Naive thymus-derived CD4-positive, alpha-beta T cell (primary cell): ENCODE measurements at regions of chr1 and their contacts with region 1.

Region 1: DNA sequence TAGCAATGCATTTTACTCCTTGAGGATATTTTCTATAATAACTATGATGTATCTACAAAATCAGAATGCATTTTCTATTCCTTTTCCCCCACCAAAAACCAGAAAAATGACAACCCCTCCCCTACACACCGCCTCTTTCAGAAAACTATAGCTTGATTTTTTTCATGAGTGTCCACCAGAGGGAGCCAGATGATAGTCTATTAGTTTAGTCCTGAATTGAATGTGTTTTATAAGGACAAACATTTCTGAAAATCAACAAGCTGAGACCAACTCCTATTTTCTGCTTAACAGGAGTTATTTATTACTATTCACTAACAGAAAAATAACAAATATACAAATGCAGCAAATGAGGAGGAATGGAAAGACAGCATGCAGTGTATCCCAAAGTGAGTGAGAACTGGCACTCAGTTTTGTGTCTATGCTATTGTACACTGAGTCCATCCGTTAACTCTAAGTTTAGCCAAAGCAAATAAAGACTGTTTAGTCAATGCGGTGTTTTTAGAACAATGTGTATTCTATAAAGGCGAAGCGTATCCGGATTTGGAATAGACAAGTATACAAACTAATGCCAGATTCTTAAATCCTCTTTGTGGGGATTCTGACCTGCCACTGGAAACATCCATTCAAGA is 182.6 kb downstream of the VAV3 start:
- DNase-seq: peak in 7 of 9 donors; percentile 41 to 76 (median 66)
- ATAC-seq: no peak
- H3K4me3 ChIP-seq: no peak overlapping the region
- H3K4me3 Mint-ChIP-seq: no peak overlapping the region
- H3K27ac ChIP-seq: no peak overlapping the region
- H3K27ac Mint-ChIP-seq: peak overlapping the region in 1 of 9 donors; percentile 1
- H3K4me1 ChIP-seq: peaks cover 18 to 24% of the 10 kb centered on the region in 2 donors
- H3K4me1 Mint-ChIP-seq: peaks cover 23 to 39% (median 25%) of the 10 kb centered on the region in 7 donors
- H3K27me3 ChIP-seq: no peaks in the 10 kb centered on the region
- H3K27me3 Mint-ChIP-seq: peaks cover 0 to 2% (median 0%) of the 10 kb centered on the region in 5 donors

Region 2: DNA sequence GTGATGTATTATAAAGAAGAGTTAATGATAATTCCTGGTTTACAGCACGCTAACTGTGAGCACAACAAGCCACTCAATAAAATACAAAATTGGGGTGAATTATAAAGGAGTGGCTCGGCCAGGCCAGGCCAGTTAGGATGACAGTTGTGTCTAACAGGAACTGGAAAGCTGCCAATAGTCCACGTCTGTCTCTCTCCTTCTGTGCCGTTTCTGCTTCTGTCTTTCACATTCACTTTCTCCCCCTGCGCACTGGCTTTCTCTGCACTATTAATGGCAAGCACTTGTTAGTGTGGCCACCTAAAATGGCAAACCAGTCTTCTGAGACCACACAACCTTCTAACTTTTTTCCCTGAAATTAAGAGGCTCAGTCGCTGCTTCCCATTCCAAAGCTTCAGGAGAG is 247.2 kb before region 1 on chr1:
- CTCF ChIA-PET with region 1: no interaction called
- POLR2A ChIA-PET with region 1: no interaction called
- intact Hi-C with region 1: no loop called
- DNase-seq: no peak
- ATAC-seq: no peak
- H3K4me3 ChIP-seq: no peak overlapping the region
- H3K4me3 Mint-ChIP-seq: no peak overlapping the region
- H3K27ac ChIP-seq: no peak overlapping the region
- H3K27ac Mint-ChIP-seq: no peak overlapping the region
- H3K4me1 ChIP-seq: no peaks in the 10 kb centered on the region
- H3K4me1 Mint-ChIP-seq: peaks cover 0 to 2% (median 0%) of the 10 kb centered on the region in 7 donors
- H3K27me3 ChIP-seq: no peaks in the 10 kb centered on the region
- H3K27me3 Mint-ChIP-seq: peaks cover 4 to 15% (median 7%) of the 10 kb centered on the region in 5 donors

Region 3: DNA sequence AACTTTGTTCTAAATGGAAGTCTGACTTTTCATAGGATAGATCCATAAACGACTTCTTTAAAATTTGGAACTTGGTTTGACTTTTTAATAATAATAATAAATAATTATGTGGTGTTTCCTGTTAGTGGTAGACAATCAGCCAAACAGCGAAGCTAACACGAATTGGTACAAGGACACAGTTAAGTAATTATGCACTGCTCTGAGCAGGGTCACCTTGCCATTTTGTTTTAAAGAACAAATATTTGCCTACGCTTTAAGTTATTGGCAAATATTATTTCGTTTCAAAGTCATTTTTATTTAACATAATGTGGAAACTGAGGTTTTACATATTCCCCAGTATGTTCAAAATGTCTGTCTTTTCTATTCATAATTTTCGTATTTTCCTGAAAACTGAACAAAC is 26.0 kb before region 1 on chr1:
- CTCF ChIA-PET with region 1: no interaction called
- POLR2A ChIA-PET with region 1: no interaction called
- intact Hi-C with region 1: no loop called
- DNase-seq: no peak
- ATAC-seq: no peak
- H3K4me3 ChIP-seq: no peak overlapping the region
- H3K4me3 Mint-ChIP-seq: no peak overlapping the region
- H3K27ac ChIP-seq: no peak overlapping the region
- H3K27ac Mint-ChIP-seq: no peak overlapping the region
- H3K4me1 ChIP-seq: no peaks in the 10 kb centered on the region
- H3K4me1 Mint-ChIP-seq: no peaks in the 10 kb centered on the region
- H3K27me3 ChIP-seq: no peaks in the 10 kb centered on the region
- H3K27me3 Mint-ChIP-seq: no peaks in the 10 kb centered on the region

Region 4: DNA sequence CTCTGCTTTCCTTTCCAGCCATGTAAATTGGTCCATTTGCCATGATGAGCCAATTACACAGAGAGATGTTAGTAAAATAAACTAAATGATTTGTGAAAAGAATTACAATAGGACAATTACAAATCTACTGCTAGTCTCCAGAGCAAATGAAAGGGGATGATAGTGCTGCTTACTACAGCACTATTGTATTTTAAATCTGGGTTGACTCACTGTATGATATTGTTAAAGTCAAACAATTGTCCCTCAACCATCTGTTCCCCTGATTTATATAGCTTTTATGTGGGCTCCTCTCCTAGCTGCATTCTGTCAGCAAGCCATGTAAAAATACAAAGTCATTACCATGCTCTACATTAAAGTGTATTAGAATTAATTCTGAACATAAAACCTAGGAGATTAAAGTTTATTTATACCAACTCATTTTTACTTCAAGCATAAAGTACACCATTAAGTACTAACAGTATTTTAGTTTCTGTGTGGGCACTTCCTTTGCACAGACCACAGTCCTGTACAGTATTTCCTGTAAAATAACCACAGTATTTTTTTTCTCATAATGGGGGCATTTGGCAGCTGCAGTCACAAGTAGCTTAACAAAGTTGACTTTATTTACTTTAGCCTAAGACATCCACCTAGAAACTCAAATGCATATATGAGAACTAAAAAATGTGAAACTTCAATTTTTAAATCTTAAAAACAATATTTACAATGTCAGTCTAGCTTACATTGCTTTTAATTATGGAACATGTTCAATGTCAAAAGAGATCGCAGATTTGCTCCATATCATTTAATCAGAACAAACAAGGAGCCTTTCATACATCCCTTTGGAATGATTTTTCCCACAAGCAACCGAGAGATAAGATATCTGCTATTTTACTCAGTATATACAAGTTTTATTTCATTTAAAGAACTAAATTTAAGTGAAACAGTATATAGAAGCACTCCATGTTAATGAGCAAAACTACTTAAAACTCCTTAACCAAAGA is 47.0 kb after region 1 on chr1:
- CTCF ChIA-PET with region 1: no interaction called
- POLR2A ChIA-PET with region 1: no interaction called
- intact Hi-C with region 1: loop called in 1 of 2 experiments (anchors 5 kb)
- DNase-seq: no peak
- ATAC-seq: peak; percentile 80
- H3K4me3 ChIP-seq: no peak overlapping the region
- H3K4me3 Mint-ChIP-seq: peak overlapping the region in 8 of 10 donors; percentile 18 to 65 (median 42)
- H3K27ac ChIP-seq: no peak overlapping the region
- H3K27ac Mint-ChIP-seq: peak overlapping the region in 7 of 9 donors; percentile 25 to 56 (median 32)
- H3K4me1 ChIP-seq: peaks cover 9 to 38% of the 10 kb centered on the region in 2 donors
- H3K4me1 Mint-ChIP-seq: peaks cover 23 to 59% (median 27%) of the 10 kb centered on the region in 7 donors
- H3K27me3 ChIP-seq: no peaks in the 10 kb centered on the region
- H3K27me3 Mint-ChIP-seq: no peaks in the 10 kb centered on the region

Region 5: DNA sequence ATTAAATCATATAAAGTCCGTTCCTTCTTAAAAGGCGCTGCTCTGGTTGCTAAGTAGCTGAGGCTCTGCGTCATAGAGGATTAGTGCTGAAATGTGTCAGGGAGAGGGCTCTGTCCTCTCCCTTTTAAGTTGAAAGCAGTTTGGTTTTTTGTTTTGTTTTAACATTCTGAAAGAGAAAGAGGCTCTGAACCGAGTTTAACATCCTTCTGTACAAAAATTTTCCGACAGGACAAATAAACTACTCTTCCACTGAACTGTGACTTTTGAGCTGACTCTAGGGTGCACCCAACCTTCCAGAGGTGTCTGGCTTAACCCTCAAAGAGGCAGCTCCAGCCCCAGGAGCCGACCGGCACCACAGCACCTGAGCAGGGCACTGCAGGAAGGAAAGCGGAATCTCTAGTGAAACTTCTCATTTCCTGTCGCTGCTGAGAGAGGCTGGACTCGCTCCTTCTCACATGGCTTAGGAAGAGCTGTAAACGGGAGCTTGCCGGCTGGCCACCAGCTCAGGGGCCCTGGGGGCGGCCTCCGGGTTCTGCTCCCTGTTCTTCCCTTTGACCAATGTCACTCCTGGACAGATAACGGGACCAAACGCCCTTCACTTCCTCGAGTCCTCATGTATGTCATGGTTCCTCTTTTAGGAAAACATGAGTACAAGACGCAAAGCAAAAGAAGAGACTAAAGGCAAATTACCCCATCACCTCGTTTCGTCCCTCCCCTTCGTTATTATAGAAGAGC is 181.4 kb after region 1 on chr1:
- CTCF ChIA-PET with region 1: interaction called, 10 read pairs
- POLR2A ChIA-PET with region 1: no interaction called
- intact Hi-C with region 1: loop called (anchors 1 kb)
- DNase-seq: peak; percentile 27 to 70 (median 62)
- ATAC-seq: peak; percentile 79
- H3K4me3 ChIP-seq: peak overlapping the region; percentile 87
- H3K4me3 Mint-ChIP-seq: peak overlapping the region; percentile 91 to 99 (median 98)
- H3K27ac ChIP-seq: peak overlapping the region; percentile 67
- H3K27ac Mint-ChIP-seq: peak overlapping the region; percentile 79 to 98 (median 92)
- H3K4me1 ChIP-seq: peaks cover 11% of the 10 kb centered on the region in 2 donors
- H3K4me1 Mint-ChIP-seq: peaks cover 15 to 43% (median 27%) of the 10 kb centered on the region in 7 donors
- H3K27me3 ChIP-seq: no peaks in the 10 kb centered on the region
- H3K27me3 Mint-ChIP-seq: peaks cover 0 to 3% (median 0%) of the 10 kb centered on the region in 5 donors

Region 6: GRCh38 chr1:108118018-108118902 is 335.9 kb after region 1 on chr1:
- CTCF ChIA-PET with region 1: interaction called, 259 read pairs
- POLR2A ChIA-PET with region 1: no interaction called
- intact Hi-C with region 1: no loop called
- DNase-seq: no peak
- ATAC-seq: no peak
- H3K4me3 ChIP-seq: no peak overlapping the region
- H3K4me3 Mint-ChIP-seq: no peak overlapping the region
- H3K27ac ChIP-seq: no peak overlapping the region
- H3K27ac Mint-ChIP-seq: peak overlapping the region in 3 of 9 donors; percentile 1 to 73 (median 8)
- H3K4me1 ChIP-seq: no peaks in the 10 kb centered on the region
- H3K4me1 Mint-ChIP-seq: peaks cover 4 to 23% (median 12%) of the 10 kb centered on the region in 7 donors
- H3K27me3 ChIP-seq: no peaks in the 10 kb centered on the region
- H3K27me3 Mint-ChIP-seq: peaks cover 0 to 8% (median 0%) of the 10 kb centered on the region in 5 donors

Region 7: DNA sequence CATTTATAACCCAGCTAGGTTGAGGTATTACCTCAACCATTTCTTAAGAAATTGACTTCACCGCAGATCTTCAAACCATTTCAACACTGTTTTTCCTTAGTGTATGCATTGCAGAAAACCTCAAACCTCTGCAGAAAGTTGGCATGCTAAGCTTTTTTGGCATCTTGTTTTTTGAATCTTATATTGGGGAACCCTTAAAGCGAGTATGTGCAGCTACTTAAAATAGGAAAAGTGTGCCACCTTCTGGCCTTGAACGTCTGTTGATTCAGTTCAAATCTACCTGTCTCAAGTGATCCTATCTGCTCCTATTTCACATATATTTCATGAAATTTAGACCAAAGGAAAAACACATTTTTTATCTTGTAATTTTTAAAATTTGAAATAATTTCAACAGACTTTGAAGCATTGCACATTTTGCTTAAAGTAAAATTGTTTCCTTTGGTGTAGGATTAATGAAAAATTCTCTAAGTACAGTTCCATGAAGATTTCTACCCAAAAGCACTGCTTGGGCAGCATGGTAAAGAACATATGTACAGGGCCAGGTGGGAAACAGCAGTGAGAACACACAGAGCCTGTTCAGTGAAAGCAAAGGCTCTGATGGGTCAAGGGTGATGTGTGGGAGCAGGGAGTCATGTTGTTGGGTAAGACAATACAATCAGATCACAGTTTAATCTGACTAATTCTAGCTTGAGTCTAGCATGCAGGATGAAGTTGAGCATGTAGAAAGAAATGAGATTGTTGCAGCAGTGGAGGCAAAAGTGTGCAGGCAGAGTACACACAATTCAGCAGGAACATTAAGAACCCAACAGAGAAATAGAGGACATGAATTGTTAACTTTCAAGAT is 861.4 kb after region 1 on chr1:
- CTCF ChIA-PET with region 1: no interaction called
- POLR2A ChIA-PET with region 1: interaction called, 3 read pairs
- intact Hi-C with region 1: loop called (anchors 1 to 5 kb)
- DNase-seq: peak in 7 of 9 donors; percentile 59 to 78 (median 67)
- ATAC-seq: peak; percentile 45
- H3K4me3 ChIP-seq: no peak overlapping the region
- H3K4me3 Mint-ChIP-seq: peak overlapping the region in 9 of 10 donors; percentile 4 to 70 (median 47)
- H3K27ac ChIP-seq: peak overlapping the region; percentile 71
- H3K27ac Mint-ChIP-seq: peak overlapping the region; percentile 68 to 100 (median 98)
- H3K4me1 ChIP-seq: peaks cover 49 to 52% of the 10 kb centered on the region in 2 donors
- H3K4me1 Mint-ChIP-seq: peaks cover 55 to 81% (median 75%) of the 10 kb centered on the region in 7 donors
- H3K27me3 ChIP-seq: no peaks in the 10 kb centered on the region
- H3K27me3 Mint-ChIP-seq: no peaks in the 10 kb centered on the region